ENCODE measurements at regions of chr1 and their contacts with region 1.

Region 1: DNA sequence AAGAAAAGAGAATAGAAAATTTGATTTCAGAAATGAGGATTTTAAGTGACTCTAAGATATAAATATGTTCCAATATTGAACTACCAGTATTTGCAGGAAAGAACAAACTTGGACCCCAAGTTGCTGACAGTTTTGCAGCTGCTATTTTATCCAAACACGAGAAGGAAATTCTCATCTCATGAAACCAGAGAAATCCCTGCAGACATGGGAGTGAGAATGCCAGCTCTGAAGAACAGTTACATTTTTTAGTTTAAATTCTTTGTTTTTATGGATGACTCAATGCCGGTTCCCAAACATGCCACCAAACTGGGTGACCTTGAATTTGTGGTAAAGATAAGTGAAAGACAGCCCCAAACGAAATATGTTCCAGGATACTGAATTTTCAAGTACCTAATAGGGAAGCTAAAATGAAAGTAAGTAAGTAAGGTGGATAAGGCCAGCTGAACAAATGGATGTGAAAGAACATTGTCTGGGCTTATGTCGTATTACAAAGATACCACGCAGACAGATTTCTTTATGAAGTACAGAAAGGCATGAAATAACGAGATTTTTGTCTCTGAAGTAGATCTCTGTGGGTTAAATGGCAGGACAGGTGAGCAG is 19.9 kb downstream of the TLR5 start:
- DNase-seq: no peak
- H3K4me3 Mint-ChIP-seq: peak overlapping the region; percentile 11
- H3K27ac Mint-ChIP-seq: no peak overlapping the region
- H3K4me1 Mint-ChIP-seq: peaks cover 8% of the 10 kb centered on the region
- H3K27me3 Mint-ChIP-seq: no peaks in the 10 kb centered on the region

Region 2: DNA sequence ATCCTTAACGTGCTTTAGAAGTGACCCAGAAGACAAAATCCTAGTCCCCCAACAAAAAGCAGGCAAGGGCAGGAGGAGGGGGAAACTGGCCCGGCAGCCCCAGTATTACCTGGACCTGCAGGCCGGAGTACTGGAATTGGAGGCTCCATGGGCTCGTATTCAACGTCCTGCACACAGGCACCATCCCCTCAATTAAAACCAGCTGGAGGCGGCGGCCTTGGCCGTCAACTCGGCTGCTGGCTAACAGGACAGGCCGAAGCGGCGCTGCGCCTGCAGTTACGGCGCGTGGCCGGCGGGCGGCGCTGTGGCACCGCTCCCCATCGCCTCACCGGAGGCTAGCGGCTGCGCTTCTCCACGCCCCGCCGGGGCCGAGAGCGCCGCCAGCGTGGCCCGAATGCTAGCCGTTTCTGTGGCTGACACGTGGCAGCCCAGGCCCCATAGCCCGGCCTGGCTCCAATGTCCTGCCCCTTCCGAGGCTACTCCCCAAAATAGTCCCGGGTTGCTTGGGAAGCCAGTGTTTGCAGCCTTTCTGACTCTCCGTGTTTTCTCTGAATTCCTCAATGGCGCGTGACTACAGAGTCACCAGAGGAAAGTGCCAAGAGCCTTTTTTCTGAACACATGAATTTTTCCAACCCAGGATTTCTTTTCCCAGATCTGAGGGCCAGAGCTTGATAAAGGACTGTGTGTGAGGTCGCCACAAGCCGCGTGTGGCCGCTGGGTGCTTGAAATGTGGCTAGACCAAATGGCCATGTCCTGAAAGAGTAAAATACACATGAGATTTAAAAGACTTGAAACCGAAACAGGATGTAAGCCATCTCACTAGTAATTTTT is 657.7 kb before region 1 on chr1:
- CTCF ChIA-PET with region 1: interaction called, 12 read pairs
- POLR2A ChIA-PET with region 1: no interaction called
- intact Hi-C with region 1: no loop called
- DNase-seq: peak; percentile 87
- H3K4me3 Mint-ChIP-seq: peak overlapping the region; percentile 79
- H3K27ac Mint-ChIP-seq: peak overlapping the region; percentile 72
- H3K4me1 Mint-ChIP-seq: peaks cover 10% of the 10 kb centered on the region
- H3K27me3 Mint-ChIP-seq: no peaks in the 10 kb centered on the region

Region 3: GRCh38 chr1:222739465-222739864 is 383.6 kb before region 1 on chr1:
- CTCF ChIA-PET with region 1: interaction called, 6 read pairs
- POLR2A ChIA-PET with region 1: no interaction called
- intact Hi-C with region 1: loop called (anchors 1 kb)
- DNase-seq: no peak
- H3K4me3 Mint-ChIP-seq: no peak overlapping the region
- H3K27ac Mint-ChIP-seq: no peak overlapping the region
- H3K4me1 Mint-ChIP-seq: no peaks in the 10 kb centered on the region
- H3K27me3 Mint-ChIP-seq: no peaks in the 10 kb centered on the region

Region 4: GRCh38 chr1:222792744-222793143 is 330.4 kb before region 1 on chr1:
- CTCF ChIA-PET with region 1: interaction called, 17 read pairs
- POLR2A ChIA-PET with region 1: interaction called, 5 read pairs
- intact Hi-C with region 1: loop called (anchors 2 kb)
- DNase-seq: no peak
- H3K4me3 Mint-ChIP-seq: no peak overlapping the region
- H3K27ac Mint-ChIP-seq: no peak overlapping the region
- H3K4me1 Mint-ChIP-seq: peaks cover 5% of the 10 kb centered on the region
- H3K27me3 Mint-ChIP-seq: peaks cover 2% of the 10 kb centered on the region

Region 5: GRCh38 chr1:222897527-222898190 is 225.5 kb before region 1 on chr1:
- CTCF ChIA-PET with region 1: no interaction called
- POLR2A ChIA-PET with region 1: no interaction called
- intact Hi-C with region 1: no loop called
- DNase-seq: no peak
- H3K4me3 Mint-ChIP-seq: no peak overlapping the region
- H3K27ac Mint-ChIP-seq: no peak overlapping the region
- H3K4me1 Mint-ChIP-seq: peaks cover 15% of the 10 kb centered on the region
- H3K27me3 Mint-ChIP-seq: no peaks in the 10 kb centered on the region

Region 6: GRCh38 chr1:223081181-223081994 is 41.7 kb before region 1 on chr1:
- CTCF ChIA-PET with region 1: interaction called, 8 read pairs
- POLR2A ChIA-PET with region 1: no interaction called
- intact Hi-C with region 1: loop called (anchors 5 kb)
- DNase-seq: peak; percentile 83
- H3K4me3 Mint-ChIP-seq: peak overlapping the region; percentile 18
- H3K27ac Mint-ChIP-seq: no peak overlapping the region
- H3K4me1 Mint-ChIP-seq: no peaks in the 10 kb centered on the region
- H3K27me3 Mint-ChIP-seq: peaks cover 6% of the 10 kb centered on the region

Region 7: GRCh38 chr1:223087291-223088255 is 35.5 kb before region 1 on chr1:
- CTCF ChIA-PET with region 1: interaction called, 31 read pairs
- POLR2A ChIA-PET with region 1: no interaction called
- intact Hi-C with region 1: loop called (anchors 5 kb)
- DNase-seq: no peak
- H3K4me3 Mint-ChIP-seq: no peak overlapping the region
- H3K27ac Mint-ChIP-seq: no peak overlapping the region
- H3K4me1 Mint-ChIP-seq: no peaks in the 10 kb centered on the region
- H3K27me3 Mint-ChIP-seq: no peaks in the 10 kb centered on the region

Region 8: GRCh38 chr1:223142795-223143536 is 19.9 kb after region 1 on chr1 and contains the start of gene TLR5:
- CTCF ChIA-PET with region 1: interaction called, 122 read pairs
- POLR2A ChIA-PET with region 1: no interaction called
- intact Hi-C with region 1: no loop called
- DNase-seq: peak; percentile 93
- H3K4me3 Mint-ChIP-seq: peak within 1 kb of the TSS; percentile 63
- H3K27ac Mint-ChIP-seq: peak within 1 kb of the TSS; percentile 9
- H3K4me1 Mint-ChIP-seq: peaks cover 19% of the 10 kb centered on the region
- H3K27me3 Mint-ChIP-seq: no peaks in the 10 kb centered on the region
- total RNA-seq, gene TLR5: 0.29 to 0.48 TPM

Region 9: GRCh38 chr1:223189903-223190724 is 67.0 kb after region 1 on chr1:
- CTCF ChIA-PET with region 1: no interaction called
- POLR2A ChIA-PET with region 1: no interaction called
- intact Hi-C with region 1: no loop called
- DNase-seq: peak; percentile 79
- H3K4me3 Mint-ChIP-seq: peak overlapping the region; percentile 40
- H3K27ac Mint-ChIP-seq: peak overlapping the region; percentile 59
- H3K4me1 Mint-ChIP-seq: peaks cover 23% of the 10 kb centered on the region
- H3K27me3 Mint-ChIP-seq: peaks cover 11% of the 10 kb centered on the region

Region 10: DNA sequence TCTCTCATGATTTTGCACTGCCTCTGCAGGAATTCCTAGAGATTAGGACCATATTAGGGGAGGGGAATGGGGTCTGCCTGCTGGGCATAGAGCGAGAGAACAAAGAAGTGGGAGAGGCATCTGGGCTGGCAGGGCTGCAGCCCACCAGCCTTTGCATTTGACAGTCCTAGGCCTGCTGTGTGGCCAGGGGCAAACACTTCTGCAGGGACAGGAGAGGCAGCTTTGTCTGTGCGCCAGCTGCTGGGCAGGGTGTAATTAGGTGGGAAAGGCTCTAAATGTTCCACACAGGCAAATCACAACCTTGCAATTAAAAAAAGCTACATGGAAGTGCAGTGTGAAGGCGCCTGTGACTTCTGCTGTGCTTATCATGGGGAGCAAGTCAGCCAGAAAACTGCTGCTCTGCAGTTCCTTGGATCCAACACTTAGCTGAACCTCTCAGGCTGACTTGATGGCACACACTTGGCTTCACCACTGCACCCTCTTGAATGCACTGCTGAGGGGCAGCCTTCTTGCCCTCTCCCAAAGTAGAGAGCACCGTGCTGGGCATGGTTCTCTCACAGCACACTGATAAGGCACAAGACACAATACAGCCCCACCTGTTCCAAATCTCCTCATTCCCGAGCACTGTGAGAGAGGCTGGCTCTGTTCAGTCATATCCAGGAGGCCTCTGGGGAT is 93.6 kb after region 1 on chr1:
- CTCF ChIA-PET with region 1: no interaction called
- POLR2A ChIA-PET with region 1: no interaction called
- intact Hi-C with region 1: no loop called
- DNase-seq: no peak
- H3K4me3 Mint-ChIP-seq: no peak overlapping the region
- H3K27ac Mint-ChIP-seq: no peak overlapping the region
- H3K4me1 Mint-ChIP-seq: no peaks in the 10 kb centered on the region
- H3K27me3 Mint-ChIP-seq: peaks cover under 1% of the 10 kb centered on the region